Heart right ventricle (tissue), 16 donors: ENCODE measurements at regions of chr9 and their contacts with region 1.

Region 1: GRCh38 chr9:75644649-75645048 is 245.8 kb upstream of the PCSK5 start:
- DNase-seq: no peak
- ATAC-seq: peak in 3 of 8 donors; percentile 31 to 55 (median 44)
- H3K4me3 ChIP-seq: no peak overlapping the region
- H3K27ac ChIP-seq: no peak overlapping the region
- H3K4me1 ChIP-seq: peaks cover 0 to 26% (median 5%) of the 10 kb centered on the region in 9 donors
- H3K27me3 ChIP-seq: no peaks in the 10 kb centered on the region
- CTCF ChIP-seq: no peak

Region 2: GRCh38 chr9:75683591-75683990 is 38.9 kb after region 1 on chr9:
- intact Hi-C with region 1: loop called in 1 of 10 experiments (anchors 1 kb)
- DNase-seq: no peak
- ATAC-seq: no peak
- H3K4me3 ChIP-seq: no peak overlapping the region
- H3K27ac ChIP-seq: no peak overlapping the region
- H3K4me1 ChIP-seq: peaks cover 0 to 18% (median 0%) of the 10 kb centered on the region in 9 donors
- H3K27me3 ChIP-seq: no peaks in the 10 kb centered on the region
- CTCF ChIP-seq: no peak